Transverse colon (tissue), 4 donors: ENCODE measurements at regions of chr10 and their contacts with region 1.

Region 1: DNA sequence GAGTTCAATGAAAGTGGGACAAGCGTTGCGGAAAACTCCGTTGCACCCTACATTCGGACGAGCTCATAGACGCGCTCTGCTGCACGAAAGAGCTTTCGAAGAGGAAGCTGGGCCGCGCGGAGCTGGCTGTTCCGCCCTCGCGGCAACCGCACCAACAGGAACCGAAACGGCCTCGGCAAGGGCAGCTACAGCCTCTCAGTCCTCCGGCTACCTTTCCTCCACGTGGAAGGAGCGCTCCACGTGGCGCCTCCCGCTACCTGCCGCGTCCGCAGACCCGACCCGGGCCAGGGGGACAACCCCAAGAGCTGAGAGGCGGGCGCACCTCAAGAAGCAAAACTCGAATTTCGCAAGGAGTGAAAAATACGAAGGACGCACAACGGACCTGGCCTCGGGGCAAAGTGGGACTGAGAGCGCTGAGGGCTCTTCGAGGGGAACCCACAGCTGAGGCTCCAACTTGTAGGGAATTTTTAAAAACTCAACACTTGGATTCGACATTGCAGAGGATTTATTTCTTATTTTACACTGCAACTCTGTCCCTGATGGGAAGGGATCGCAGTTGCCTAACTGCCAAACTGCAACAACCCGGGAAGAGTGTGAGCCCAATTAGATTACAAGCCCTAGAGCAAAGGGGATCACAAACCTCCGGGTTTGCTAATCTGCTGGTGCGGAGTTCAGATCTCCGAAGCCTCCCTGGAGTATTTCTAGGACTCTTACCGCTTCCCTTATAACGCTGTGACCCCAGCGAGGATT is 1.4 kb downstream of the HPSE2 start:
- DNase-seq: peak; percentile 50
- H3K4me3 ChIP-seq: peak overlapping the region; percentile 2 to 58 (median 16)
- H3K27ac ChIP-seq: peak overlapping the region; percentile 46 to 70 (median 60)
- H3K4me1 ChIP-seq: peaks cover 0 to 26% (median 18%) of the 10 kb centered on the region in 4 donors
- H3K27me3 ChIP-seq: peaks cover 91% of the 10 kb centered on the region
- CTCF ChIP-seq: no peak
- EP300 ChIP-seq: no peak
- POLR2A ChIP-seq: no peak

Region 2: DNA sequence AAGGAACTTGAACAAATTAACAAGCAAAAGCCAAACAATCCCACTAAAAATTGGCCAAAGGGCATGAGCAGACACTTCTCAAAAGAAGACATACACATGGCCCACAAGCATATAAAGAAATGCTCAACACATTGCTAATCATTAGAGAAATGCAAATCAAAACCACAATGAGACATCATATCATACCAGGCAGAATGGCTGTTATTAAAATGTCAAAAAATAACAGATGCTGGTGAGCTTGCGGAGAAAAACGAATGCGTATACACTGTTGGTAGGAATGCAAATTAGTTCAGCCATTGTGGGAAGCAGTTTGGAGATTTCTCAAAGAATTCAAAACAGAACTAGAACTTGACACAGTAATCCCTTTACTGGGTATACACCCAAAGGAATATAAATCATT is 475.8 kb before region 1 on chr10:
- in situ Hi-C with region 1: loop called in 1 of 4 experiments (anchors 25 kb)
- intact Hi-C with region 1: no loop called
- DNase-seq: no peak
- H3K4me3 ChIP-seq: no peak overlapping the region
- H3K27ac ChIP-seq: no peak overlapping the region
- H3K4me1 ChIP-seq: no peaks in the 10 kb centered on the region
- H3K27me3 ChIP-seq: no peaks in the 10 kb centered on the region
- CTCF ChIP-seq: no peak
- EP300 ChIP-seq: no peak
- POLR2A ChIP-seq: no peak